WTC11 (cell line): ENCODE measurements at regions of chr2 and their contacts with region 1.

Region 1: GRCh38 chr2:134452042-134452733 is 198.3 kb downstream of the MGAT5 start:
- DNase-seq: no peak
- ATAC-seq: no peak
- H3K4me3 Mint-ChIP-seq: no peak overlapping the region
- H3K27ac Mint-ChIP-seq: no peak overlapping the region
- H3K4me1 Mint-ChIP-seq: peaks cover 10% of the 10 kb centered on the region
- H3K27me3 Mint-ChIP-seq: no peaks in the 10 kb centered on the region
- CTCF ChIP-seq: no peak

Region 2: DNA sequence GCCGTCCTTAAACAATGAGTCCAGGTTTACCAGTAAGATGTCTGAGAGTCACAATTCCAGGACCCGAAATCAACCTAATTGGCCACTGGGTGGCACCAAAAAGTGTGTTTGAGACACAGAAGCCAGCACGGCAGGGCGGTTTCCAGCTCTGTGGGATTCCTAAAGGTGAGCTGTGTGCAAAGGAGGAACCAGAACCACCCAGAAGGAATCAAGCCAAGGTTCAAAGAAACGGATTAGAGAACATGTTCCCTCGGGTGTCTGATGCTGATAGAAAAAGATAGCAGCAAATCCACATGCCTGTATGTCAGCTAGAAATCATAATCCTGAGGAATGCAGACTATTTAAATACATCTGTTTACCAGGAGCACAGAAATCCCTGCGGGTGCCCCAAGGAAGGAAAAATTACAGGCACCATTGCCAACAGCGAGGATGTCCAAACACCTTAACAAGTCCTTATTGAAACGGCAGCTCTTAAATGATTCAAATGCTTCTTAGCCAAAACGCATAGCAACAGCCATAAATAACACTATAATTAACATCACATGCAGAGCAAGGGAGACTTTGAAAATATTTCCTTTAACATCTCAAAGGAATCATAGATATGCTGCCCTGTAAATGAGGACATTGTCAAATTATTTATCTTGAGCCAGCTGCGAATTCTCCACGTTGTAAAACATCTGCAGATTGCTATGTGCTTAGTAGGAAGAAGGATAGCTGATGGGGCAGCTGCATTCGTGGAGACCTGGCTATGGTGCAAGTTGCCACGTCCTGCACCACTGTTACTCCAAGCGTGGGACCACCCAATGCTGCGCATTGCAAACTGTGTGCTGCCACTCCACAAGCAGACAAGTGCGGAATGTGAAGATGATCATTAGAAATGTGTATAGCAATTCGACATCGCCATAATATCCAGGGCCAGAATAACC is 565.2 kb before region 1 on chr2:
- CTCF ChIA-PET with region 1: interaction called, 60 read pairs
- POLR2A ChIA-PET with region 1: no interaction called
- DNase-seq: peak; percentile 75
- ATAC-seq: peak; percentile 88
- H3K4me3 Mint-ChIP-seq: no peak overlapping the region
- H3K27ac Mint-ChIP-seq: no peak overlapping the region
- H3K4me1 Mint-ChIP-seq: peaks cover 18% of the 10 kb centered on the region
- H3K27me3 Mint-ChIP-seq: no peaks in the 10 kb centered on the region; the same call in none of the 2 replicates
- CTCF ChIP-seq: peak; percentile 32; the same call in 1 of the 2 replicates

Region 3: GRCh38 chr2:134245340-134245984 is 206.7 kb before region 1 on chr2:
- CTCF ChIA-PET with region 1: interaction called, 12 read pairs
- POLR2A ChIA-PET with region 1: no interaction called
- DNase-seq: peak; percentile 80
- ATAC-seq: peak; percentile 81
- H3K4me3 Mint-ChIP-seq: no peak overlapping the region
- H3K27ac Mint-ChIP-seq: no peak overlapping the region
- H3K4me1 Mint-ChIP-seq: peaks cover 23% of the 10 kb centered on the region
- H3K27me3 Mint-ChIP-seq: no peaks in the 10 kb centered on the region
- CTCF ChIP-seq: peak; percentile 85

Region 4: DNA sequence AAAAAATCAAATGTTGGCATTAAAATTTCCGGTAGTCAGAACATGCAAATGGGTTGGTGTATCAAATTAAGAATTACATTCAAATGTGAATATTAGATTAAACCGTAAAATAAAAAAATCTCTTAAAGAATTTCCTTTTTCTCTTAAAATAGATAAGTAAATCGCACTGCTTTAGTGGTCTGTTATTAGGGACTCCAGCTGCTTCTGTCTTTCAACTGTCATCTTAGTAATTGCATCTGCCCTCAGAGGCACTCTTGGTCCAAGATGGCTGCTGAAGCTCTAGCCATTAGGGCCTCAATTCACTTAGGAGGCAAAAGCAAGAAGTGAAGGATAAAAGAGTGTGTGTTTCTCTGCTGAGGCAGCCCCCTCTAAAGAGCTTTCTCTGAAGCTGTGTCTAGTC is 65.9 kb before region 1 on chr2:
- CTCF ChIA-PET with region 1: interaction called, 23 read pairs
- POLR2A ChIA-PET with region 1: no interaction called
- DNase-seq: no peak
- ATAC-seq: no peak
- H3K4me3 Mint-ChIP-seq: no peak overlapping the region
- H3K27ac Mint-ChIP-seq: no peak overlapping the region
- H3K4me1 Mint-ChIP-seq: no peaks in the 10 kb centered on the region
- H3K27me3 Mint-ChIP-seq: no peaks in the 10 kb centered on the region
- CTCF ChIP-seq: no peak

Region 5: DNA sequence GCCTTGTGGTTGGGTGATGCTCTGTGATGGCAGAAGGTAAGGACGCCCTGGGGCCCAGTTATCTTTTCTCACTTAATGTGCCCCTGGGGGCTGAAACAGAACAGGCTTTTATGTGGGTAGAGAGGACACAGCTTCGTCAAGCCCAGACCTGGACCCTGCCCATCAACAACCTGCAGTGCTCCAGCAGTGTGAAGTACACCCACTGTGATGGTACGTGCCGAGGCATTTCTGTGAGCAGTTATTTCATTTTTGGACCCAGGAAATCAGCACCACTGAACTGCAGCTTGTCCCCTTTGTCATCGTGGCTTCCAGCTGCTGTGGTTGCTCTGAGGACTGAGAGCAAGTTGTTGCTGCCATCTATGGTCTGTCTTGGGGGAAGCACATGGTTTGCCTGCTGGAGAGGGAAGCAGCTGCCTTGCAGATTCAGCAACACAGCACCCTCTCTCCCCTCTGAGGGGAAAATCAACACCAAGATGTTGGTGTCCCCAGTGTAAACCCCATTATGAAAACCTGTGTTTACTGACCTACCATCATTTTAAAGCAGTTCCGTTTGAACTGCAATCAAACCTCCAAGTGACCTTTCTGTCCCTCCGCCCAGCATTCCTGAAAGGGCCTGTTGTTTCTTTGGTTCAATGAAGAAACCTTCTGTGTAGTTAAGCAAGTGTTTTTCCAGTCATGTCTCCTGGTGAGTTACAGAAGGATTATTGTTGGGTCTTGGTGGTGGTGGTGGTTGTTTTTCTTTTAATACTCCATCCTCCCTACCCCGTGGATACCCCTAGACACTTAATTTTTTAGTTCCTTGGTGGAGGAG is 40.2 kb before region 1 on chr2:
- CTCF ChIA-PET with region 1: interaction called, 43 read pairs
- POLR2A ChIA-PET with region 1: no interaction called
- DNase-seq: peak; percentile 64
- ATAC-seq: peak; percentile 97
- H3K4me3 Mint-ChIP-seq: no peak overlapping the region
- H3K27ac Mint-ChIP-seq: no peak overlapping the region
- H3K4me1 Mint-ChIP-seq: peaks cover 13% of the 10 kb centered on the region
- H3K27me3 Mint-ChIP-seq: no peaks in the 10 kb centered on the region
- CTCF ChIP-seq: 0 out of 2 replicates have a peak, but pooled peaks have one; percentile 28

Region 6: DNA sequence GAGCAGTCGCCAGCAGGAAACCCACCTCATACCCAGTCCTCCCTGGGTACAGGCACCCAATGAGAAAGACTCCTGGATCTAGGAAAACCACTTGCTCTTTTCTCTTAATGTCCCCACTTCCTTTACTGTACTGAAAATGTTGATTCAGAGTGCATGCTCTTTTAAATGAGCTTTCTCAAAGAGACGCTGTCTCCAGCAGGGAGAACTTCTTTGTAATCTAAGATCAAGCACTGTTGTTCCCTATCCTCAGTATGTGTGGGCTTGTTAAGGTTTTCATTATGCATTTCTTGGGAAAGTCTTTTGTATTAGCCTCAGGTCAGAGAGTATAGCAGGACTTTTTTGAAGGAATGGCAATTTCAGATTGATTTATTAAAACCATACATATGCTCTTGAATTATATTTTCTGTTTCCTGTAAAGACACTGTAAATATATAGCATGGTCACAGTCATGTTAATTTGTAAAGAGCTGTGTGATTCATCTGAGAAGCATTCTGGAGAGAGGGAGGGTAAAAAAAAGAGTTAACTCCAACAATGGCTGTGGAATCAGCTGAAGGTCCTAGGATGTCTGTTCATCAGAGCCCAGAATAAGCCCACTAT is 20.3 kb before region 1 on chr2:
- CTCF ChIA-PET with region 1: interaction called, 35 read pairs
- POLR2A ChIA-PET with region 1: no interaction called
- DNase-seq: no peak
- ATAC-seq: peak; percentile 84
- H3K4me3 Mint-ChIP-seq: no peak overlapping the region
- H3K27ac Mint-ChIP-seq: no peak overlapping the region
- H3K4me1 Mint-ChIP-seq: peaks cover 17% of the 10 kb centered on the region
- H3K27me3 Mint-ChIP-seq: peaks cover 59% of the 10 kb centered on the region
- CTCF ChIP-seq: no peak

Region 7: DNA sequence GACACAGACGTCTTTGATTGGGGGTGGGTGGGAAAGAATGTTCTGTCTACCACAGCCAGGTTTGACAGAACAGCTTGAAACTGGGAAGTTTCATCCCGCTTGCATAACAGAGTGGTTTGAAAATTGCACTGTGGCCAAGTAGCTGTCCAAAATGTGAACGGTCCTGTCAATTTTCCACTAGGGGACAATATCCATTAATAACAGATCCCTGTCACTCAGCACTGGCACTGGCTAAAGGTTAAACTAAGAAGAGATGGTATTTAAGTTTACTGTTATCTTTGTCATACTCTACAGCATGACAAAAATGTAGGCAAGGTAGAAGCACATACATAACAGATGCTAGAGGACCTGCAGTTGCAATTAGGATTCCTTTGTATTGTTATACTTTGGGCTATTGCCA is 330.6 kb after region 1 on chr2:
- CTCF ChIA-PET with region 1: interaction called, 10 read pairs
- POLR2A ChIA-PET with region 1: no interaction called
- DNase-seq: no peak
- ATAC-seq: peak; percentile 69
- H3K4me3 Mint-ChIP-seq: no peak overlapping the region
- H3K27ac Mint-ChIP-seq: no peak overlapping the region
- H3K4me1 Mint-ChIP-seq: no peaks in the 10 kb centered on the region
- H3K27me3 Mint-ChIP-seq: no peaks in the 10 kb centered on the region
- CTCF ChIP-seq: peak; percentile 43; the same call in 1 of the 2 replicates